Endothelial cell of umbilical vein (primary cell): ENCODE measurements at regions of chr3 and their contacts with region 1.

Region 1: GRCh38 chr3:102163036-102163827 is 271.6 kb upstream of the ZPLD1 start:
- DNase-seq: peak; percentile 98
- H3K4me3 ChIP-seq: no peak overlapping the region
- H3K27ac ChIP-seq: peak overlapping the region; percentile 94
- H3K4me1 ChIP-seq: peaks cover 28% of the 10 kb centered on the region
- H3K27me3 ChIP-seq: no peaks in the 10 kb centered on the region
- CTCF ChIP-seq: no peak
- POLR2A ChIP-seq: no peak

Region 2: DNA sequence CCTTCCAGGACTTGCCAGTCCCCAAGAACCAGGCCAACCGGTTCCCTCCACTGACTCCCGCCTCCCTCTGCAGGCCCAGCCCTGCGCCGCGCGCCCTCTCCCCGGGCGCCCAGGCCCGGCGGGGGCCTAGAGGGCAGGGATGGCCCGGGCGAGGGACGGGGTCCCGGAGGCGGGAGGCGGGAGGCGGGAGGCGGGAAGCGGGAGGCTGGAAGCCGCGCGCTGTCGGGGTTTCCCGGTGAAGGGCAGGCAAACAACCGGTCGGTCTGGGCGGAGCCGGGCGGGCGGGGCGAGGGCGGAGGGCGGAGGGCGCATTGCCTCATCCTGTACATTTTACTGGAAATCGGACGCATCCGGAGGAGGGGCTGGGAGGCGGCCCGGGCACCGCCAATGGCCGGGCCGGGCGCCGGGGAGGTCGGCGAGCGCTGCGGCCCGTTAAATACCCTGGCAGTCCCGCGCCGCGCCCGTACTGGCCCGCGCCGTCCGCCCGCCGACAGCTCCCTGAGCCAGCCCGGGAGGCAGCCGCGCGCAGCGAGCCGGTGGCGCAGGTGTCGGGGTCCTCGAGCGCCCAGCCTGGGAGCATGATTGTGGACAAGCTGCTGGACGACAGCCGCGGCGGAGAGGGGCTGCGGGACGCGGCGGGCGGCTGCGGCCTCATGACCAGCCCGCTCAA is 314.0 kb before region 1 on chr3 and contains the start of gene NFKBIZ:
- CTCF ChIA-PET with region 1: no interaction called
- POLR2A ChIA-PET with region 1: interaction called, 4 read pairs
- dilution Hi-C with region 1: loop called (anchors 25 kb)
- intact Hi-C with region 1: loop called (anchors 1 kb)
- DNase-seq: peak; percentile 94
- H3K4me3 ChIP-seq: peak within 1 kb of the TSS; percentile 88 to 99 (median 90)
- H3K27ac ChIP-seq: peak within 1 kb of the TSS; percentile 88
- H3K4me1 ChIP-seq: peaks cover 17% of the 10 kb centered on the region
- H3K27me3 ChIP-seq: no peaks in the 10 kb centered on the region
- CTCF ChIP-seq: no peak
- POLR2A ChIP-seq: peak; percentile 99
- total RNA-seq, gene NFKBIZ: 27.4 and 28.9 TPM in 2 replicates

Region 3: GRCh38 chr3:102006812-102007485 is 156.3 kb before region 1 on chr3:
- CTCF ChIA-PET with region 1: no interaction called
- POLR2A ChIA-PET with region 1: no interaction called
- dilution Hi-C with region 1: no loop called
- intact Hi-C with region 1: no loop called
- DNase-seq: peak; percentile 87
- H3K4me3 ChIP-seq: peak overlapping the region in 1 of 3 experiments; percentile 11
- H3K27ac ChIP-seq: peak overlapping the region; percentile 69
- H3K4me1 ChIP-seq: peaks cover 18% of the 10 kb centered on the region
- H3K27me3 ChIP-seq: no peaks in the 10 kb centered on the region
- CTCF ChIP-seq: no peak
- POLR2A ChIP-seq: no peak

Region 4: GRCh38 chr3:102084006-102084405 is 79.2 kb before region 1 on chr3:
- CTCF ChIA-PET with region 1: no interaction called
- POLR2A ChIA-PET with region 1: no interaction called
- dilution Hi-C with region 1: no loop called
- intact Hi-C with region 1: loop called (anchors 2 kb)
- DNase-seq: no peak
- H3K4me3 ChIP-seq: no peak overlapping the region
- H3K27ac ChIP-seq: no peak overlapping the region
- H3K4me1 ChIP-seq: peaks cover 24% of the 10 kb centered on the region
- H3K27me3 ChIP-seq: no peaks in the 10 kb centered on the region
- CTCF ChIP-seq: no peak
- POLR2A ChIP-seq: no peak

Region 5: GRCh38 chr3:102129760-102130608 is 33.2 kb before region 1 on chr3:
- CTCF ChIA-PET with region 1: interaction called, 3 read pairs
- POLR2A ChIA-PET with region 1: no interaction called
- dilution Hi-C with region 1: no loop called
- intact Hi-C with region 1: loop called (anchors 1 kb)
- DNase-seq: peak; percentile 88
- H3K4me3 ChIP-seq: no peak overlapping the region
- H3K27ac ChIP-seq: peak overlapping the region; percentile 61
- H3K4me1 ChIP-seq: peaks cover 23% of the 10 kb centered on the region
- H3K27me3 ChIP-seq: no peaks in the 10 kb centered on the region
- CTCF ChIP-seq: no peak
- POLR2A ChIP-seq: no peak

Region 6: DNA sequence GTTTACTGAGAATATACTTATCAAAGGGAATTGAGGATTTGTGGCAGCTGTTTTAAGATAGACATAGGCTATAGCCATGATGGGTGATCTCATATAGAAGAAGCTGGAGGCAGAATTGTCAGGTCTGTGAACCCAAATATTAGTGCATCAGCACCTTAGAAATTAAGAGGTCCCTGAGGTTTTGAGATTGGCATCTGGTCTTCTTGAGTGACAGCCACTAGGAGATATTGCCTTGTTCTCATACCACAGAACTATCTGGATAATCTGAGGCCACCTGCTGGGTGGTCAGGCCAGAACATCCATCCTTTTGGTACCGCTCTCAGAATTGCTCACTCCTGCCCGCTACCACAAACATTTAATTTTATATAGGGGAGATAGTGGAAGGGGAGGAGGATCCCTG is 60.9 kb after region 1 on chr3:
- CTCF ChIA-PET with region 1: interaction called, 14 read pairs
- POLR2A ChIA-PET with region 1: no interaction called
- dilution Hi-C with region 1: no loop called
- intact Hi-C with region 1: loop called (anchors 1 kb)
- DNase-seq: peak; percentile 45
- H3K4me3 ChIP-seq: no peak overlapping the region
- H3K27ac ChIP-seq: no peak overlapping the region
- H3K4me1 ChIP-seq: no peaks in the 10 kb centered on the region
- H3K27me3 ChIP-seq: peaks cover 0 to 2% of the 10 kb centered on the region in 2 experiments
- CTCF ChIP-seq: peak; percentile 21 to 38
- POLR2A ChIP-seq: no peak